ENCODE measurements at regions of chr14 and their contacts with region 1.

Region 1: DNA sequence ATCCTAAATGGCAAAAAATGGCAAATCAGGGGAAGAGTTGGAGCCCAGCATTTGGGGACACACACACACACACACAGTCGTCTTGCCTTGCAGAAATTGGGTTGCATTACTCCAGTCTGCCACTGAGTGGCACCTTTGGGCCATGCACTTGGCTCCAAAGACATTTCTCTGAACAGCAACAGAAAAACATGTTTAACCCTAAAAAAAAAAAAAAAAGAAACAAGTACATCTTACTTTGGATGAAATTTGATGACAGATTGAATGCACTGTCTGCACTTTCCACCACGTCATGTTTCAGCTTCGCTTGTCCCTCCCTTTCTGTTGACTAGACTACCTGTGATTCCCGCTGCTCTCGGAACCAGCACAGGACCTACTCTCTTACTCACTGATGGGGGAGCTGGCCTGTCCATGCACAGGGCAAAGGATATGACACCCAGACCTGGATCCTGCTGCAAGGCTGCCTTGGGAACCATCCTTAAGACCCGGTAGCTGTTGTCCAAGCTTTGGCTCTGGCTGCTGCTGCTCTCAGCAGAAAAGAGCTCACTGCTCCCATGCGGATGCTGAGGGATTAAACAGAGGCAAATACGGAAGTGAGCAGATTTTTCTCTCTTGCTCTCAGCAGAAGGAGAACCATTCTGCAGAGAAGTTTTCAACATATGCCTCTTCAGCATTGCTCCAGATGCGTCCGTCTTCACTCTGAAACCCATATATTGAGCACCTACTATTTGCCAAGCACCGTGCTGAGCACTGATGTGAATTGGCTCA is 376.8 kb downstream of the DPF3 start:
- DNase-seq: no peak
- CTCF ChIP-seq: peak; percentile 97

Region 2: GRCh38 chr14:72120315-72120714 is 396.8 kb before region 1 on chr14:
- CTCF ChIA-PET with region 1: no interaction called
- POLR2A ChIA-PET with region 1: no interaction called
- DNase-seq: no peak
- CTCF ChIP-seq: no peak

Region 3: DNA sequence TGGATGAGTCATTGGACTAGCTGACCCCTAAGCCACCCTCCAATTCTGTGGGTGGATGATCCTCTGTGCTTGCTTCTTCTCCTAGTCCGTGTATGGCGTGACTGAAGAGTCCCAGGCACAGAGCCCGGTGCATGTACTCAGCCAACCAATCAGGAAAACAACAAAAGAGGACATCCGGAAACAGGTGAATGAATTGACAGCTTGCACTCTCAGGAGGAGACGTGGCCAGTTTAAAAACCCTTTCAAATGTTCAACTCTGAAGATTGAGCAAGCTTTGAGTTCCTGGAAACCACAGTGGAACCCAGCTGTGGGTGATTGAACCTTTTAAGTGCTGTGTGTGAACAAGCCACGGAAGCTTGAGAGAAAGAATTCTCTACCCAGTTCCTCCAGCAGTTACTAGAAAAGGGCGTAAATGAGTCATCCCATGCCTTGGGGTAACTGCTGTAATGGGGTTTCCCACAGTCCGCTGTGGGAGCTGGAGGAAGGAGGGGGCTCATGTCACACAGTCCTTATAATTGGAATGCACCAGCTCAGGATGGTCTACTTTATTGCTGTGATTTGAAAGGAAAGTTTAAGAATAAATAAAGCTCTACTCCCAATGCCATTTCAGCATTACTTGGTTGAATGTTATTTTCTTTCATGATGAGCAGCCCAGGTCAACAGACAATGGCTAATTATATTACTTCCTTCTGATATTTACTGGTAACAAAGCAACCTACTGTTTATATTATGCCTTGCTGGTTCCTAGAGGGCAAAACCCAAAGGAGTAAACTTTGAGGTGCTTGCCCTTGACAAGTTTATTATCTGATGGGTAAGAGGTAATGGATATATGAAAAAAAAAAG is 40.2 kb before region 1 on chr14:
- CTCF ChIA-PET with region 1: interaction called, 54 read pairs
- POLR2A ChIA-PET with region 1: no interaction called
- DNase-seq: peak; percentile 79
- CTCF ChIP-seq: no peak

Region 4: DNA sequence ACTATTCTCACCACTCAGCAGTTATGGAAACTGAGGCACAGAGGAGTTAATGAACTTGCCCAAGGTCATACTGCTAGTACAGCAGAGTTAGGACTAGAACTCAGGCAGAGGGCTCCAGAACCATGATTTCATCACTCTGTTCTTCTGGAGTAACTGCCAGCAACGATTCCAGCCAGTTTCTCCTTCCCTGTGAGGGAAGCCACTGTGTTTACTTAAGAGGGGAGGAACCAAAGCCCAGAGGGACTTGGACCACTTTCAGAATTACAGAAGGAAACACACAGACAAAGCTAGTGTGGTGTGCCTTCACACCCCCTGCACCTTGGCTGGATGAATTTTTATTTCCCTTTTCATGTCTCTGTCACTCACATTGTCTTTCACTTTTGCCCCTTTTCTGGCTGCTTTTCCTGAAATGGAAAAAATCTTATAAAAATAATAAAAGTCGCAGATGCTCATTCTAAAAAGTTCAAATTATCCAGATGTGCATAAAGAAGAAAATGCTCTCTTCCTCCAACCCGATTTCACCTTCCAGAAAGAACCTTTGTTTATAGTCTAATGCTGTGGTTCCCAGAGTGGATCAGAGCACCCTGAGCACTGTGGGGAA is 21.4 kb before region 1 on chr14:
- CTCF ChIA-PET with region 1: interaction called, 18 read pairs
- POLR2A ChIA-PET with region 1: no interaction called
- DNase-seq: no peak
- CTCF ChIP-seq: no peak

Region 5: DNA sequence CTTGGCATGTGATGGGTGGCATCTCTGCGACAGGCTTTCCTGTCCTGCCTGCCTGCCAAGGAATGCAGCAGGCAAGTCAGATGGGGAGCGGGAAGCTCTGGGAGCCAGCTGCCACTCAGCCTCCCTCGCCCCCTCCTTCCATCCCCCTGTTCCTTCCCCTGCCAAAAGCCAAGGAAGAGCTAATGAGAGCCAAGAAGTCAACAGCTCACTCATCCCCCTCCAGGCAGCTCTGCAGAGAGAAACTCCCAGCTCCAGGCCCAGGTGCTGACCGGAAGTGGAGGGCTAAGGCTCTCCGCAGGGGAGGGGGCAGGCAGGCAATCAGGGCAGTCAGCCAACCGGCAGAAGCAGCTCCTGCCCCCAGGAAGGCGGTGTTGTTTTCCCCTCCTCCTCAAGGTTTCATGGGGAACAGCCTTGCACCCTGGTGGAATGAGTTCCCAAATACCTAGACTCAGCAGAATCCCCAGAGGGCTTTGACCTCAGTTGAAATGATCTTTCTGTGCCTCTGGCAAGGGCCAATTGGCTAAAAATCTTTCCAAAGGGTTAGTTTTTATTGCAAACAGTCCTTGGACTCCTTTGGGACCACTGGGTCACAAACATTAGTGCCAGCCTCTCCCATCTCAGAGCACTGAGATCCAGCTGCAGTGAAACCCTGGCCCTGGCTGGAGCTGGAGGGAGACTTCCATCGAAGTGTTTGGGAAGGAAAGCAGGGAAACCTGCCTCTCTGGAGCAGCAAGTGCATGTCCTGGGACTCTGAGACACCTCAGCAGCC is 27.7 kb after region 1 on chr14:
- CTCF ChIA-PET with region 1: interaction called, 45 read pairs
- POLR2A ChIA-PET with region 1: no interaction called
- DNase-seq: no peak
- CTCF ChIP-seq: no peak

Region 6: DNA sequence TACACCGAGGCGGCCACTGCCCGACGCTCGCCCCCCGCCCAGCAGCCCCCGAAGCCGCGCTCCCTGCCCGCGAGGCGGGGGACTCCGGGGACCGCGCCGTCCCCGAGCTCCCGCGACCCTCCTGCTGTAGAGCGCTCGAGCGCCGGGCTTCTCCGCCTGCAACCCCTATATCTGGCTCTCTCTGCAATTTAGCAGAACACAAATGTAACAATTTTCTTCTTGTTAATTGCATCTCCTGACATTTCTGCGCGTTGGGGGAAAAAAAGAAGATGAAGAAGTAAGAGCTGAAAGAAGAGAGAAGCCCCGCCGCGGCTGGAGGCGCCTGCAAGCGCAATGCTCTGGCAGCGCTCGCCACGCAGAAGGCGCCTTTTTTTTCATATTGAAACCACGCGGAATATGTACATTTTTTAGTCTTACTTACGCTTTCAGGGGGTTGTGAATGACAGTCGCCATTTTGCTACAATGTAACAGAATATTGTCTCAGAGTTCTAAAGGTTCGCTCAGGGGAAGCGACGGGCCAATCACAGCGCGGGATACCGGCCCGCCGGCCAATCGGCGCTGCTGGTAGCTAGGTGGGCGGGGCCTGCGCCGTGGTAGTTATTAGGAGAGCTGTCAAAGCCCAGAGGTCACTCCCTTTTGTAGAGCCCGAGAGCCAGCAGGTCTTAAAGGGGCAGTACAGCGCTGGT is 376.7 kb after region 1 on chr14 and contains the start of gene DPF3:
- CTCF ChIA-PET with region 1: interaction called, 84 read pairs
- POLR2A ChIA-PET with region 1: no interaction called
- DNase-seq: peak; percentile 96
- CTCF ChIP-seq: no peak

Region 7: GRCh38 chr14:72926292-72927028 is 409.3 kb after region 1 on chr14 and contains the start of gene DCAF4:
- CTCF ChIA-PET with region 1: interaction called, 29 read pairs
- POLR2A ChIA-PET with region 1: no interaction called
- DNase-seq: peak; percentile 99
- CTCF ChIP-seq: no peak